Right ventricle myocardium inferior (tissue), 1 donor: ENCODE measurements at regions of chr7 and their contacts with region 1.

Region 1: DNA sequence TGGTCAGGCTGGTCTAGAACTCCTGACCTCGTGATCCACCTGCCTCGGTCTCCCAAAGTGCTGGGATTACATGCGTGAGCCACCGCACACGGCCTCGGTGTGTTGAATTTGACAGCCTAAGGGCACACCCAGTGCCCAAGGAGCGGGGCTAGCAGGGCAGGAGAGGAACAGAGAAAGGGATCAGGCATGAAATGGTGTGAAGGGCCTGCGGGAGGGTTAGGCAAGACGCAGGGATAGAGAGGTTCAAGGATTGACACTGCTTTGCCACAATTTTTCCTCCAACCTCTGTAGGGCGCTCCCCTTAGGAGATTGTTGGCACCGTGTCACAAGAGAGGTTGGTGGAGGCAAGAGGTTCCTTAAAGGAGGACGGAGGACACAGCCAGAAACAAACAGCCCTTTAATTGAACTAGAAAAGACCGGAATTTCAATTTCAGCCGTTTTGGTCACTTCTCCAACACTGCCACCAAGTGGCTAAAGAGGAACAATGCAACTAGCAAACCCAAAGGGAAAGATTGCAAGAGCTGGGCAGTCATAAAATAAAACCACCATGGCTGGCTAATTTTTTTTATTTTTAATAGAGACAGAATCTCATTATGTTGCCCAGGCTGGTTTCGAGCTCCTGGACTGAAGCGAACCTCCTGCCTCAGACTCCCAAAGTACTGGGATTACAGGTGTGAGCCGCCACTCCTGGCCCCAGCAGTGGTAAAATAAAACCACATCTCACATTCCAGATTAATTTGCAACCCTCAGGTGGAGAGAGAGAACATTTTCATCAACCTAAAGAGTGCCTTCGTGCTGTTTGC is 6.9 kb upstream of the CREB3L2 start:
- DNase-seq: no peak
- ATAC-seq: peak; percentile 56

Region 2: GRCh38 chr7:137656227-137656849 is 352.4 kb before region 1 on chr7:
- intact Hi-C with region 1: loop called (anchors 5 kb)
- DNase-seq: peak; percentile 87
- ATAC-seq: peak; percentile 76

Region 3: DNA sequence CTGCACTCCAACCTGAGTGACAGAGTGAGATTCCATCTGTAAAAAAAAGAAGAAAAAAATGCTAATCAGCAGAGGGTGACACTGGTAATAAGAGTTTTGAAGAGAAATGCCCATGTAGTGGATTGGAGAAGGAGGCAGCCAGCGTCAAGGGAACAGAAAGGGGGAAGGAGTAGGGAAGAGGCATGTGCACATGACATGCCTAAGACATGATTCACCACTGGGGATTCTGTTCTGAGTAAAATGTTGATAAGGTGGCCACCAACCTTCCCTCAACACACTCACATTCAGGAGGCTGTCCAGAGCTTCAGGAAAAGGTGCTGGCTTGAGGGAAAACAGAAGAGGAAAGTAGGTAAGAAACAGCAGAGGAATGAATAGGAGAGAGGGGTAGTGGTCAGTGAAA is 107.4 kb after region 1 on chr7:
- intact Hi-C with region 1: no loop called
- DNase-seq: no peak
- ATAC-seq: no peak